Psoas muscle (tissue), 8 donors: ENCODE measurements at regions of chr15 and their contacts with region 1.

Region 1: DNA sequence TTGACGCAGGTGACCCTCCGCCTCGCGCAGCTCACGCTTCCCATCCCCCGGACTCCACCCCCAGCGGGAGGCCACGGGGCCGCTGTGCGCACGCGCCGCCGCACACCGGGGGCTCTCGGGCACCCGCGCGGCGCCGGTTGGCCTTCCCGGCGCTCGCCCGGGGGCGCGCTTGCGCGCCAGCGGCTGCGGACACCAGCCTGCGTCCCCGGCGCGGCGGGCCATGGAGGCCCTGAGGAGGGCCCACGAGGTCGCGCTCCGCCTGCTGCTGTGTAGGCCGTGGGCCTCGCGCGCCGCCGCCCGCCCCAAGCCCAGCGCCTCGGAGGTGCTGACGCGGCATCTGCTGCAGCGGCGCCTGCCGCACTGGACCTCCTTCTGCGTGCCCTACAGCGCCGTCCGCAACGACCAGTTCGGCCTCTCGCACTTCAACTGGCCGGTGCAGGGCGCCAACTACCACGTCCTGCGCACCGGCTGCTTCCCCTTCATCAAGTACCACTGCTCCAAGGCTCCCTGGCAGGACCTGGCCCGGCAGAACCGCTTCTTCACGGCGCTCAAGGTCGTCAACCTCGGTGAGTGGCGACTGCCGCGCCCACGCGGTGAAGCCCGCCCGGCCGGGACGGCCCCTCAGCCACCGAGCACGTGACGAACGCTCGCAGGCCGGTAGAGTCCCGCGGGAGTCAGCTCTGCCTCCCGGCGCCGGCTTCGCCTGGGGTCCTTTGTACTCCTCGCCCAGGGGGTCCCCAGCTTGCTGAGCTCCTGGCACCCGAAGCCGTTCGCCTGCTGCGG is at the start of gene C15orf61:
- DNase-seq: peak; percentile 88 to 92
- ATAC-seq: peak; percentile 84 to 90 (median 87)
- H3K4me3 ChIP-seq: peak within 1 kb of the TSS; percentile 93
- H3K27ac ChIP-seq: peak within 1 kb of the TSS; percentile 99
- H3K4me1 ChIP-seq: peaks cover 28% of the 10 kb centered on the region
- H3K27me3 ChIP-seq: no peaks in the 10 kb centered on the region
- CTCF ChIP-seq: no peak
- total RNA-seq, gene C15orf61: 11.2 to 20.9 (median 11.9) TPM

Region 2: GRCh38 chr15:67542420-67543347 is 21.5 kb after region 1 on chr15 and contains the start of gene MAP2K5:
- intact Hi-C with region 1: loop called in 1 of 2 experiments (anchors 1 kb)
- DNase-seq: peak; percentile 91 to 93
- ATAC-seq: peak; percentile 85 to 93 (median 89)
- H3K4me3 ChIP-seq: peak within 1 kb of the TSS; percentile 85
- H3K27ac ChIP-seq: peak within 1 kb of the TSS; percentile 90
- H3K4me1 ChIP-seq: peaks cover 12% of the 10 kb centered on the region
- H3K27me3 ChIP-seq: no peaks in the 10 kb centered on the region
- CTCF ChIP-seq: no peak
- total RNA-seq, gene MAP2K5: 14.4 to 24.0 (median 17.8) TPM

Region 3: DNA sequence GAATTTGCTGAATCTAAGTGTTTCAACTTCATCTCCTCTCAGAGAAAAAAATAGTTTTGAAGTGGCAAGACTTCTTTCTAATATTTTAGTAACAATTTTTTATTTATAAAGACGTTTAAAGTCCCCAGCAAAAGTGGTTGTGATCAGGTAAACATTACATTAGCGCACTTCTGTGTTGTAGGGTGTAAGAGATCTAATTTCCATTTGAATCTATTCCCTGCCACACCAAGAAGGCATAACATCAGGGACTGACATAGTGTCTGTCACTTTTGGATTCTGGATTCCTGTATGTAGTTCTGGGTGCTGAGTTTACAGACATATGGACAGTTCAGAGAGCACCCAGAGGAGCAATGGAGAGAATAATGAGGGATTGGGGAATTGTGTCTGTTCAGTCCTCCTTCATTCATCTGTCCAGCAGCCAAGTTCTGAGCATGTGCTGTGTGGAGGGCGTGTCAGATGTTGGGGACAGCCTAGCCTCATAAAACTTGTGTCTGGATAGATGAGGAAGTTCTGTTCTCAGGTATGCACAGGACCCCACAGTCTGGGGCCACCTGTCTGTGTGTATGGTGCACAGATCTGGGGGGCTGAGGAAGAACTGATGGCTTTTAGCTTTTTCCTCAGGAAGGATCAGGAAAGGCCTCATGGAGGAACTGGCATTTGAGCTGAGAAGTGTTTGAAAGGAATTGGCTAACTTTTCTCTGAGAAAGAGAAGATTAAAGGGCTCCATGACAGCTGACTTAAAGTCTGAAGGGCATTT is 86.9 kb after region 1 on chr15:
- intact Hi-C with region 1: no loop called
- DNase-seq: no peak
- ATAC-seq: no peak
- H3K4me3 ChIP-seq: no peak overlapping the region
- H3K27ac ChIP-seq: no peak overlapping the region
- H3K4me1 ChIP-seq: no peaks in the 10 kb centered on the region
- H3K27me3 ChIP-seq: no peaks in the 10 kb centered on the region
- CTCF ChIP-seq: no peak

Region 4: DNA sequence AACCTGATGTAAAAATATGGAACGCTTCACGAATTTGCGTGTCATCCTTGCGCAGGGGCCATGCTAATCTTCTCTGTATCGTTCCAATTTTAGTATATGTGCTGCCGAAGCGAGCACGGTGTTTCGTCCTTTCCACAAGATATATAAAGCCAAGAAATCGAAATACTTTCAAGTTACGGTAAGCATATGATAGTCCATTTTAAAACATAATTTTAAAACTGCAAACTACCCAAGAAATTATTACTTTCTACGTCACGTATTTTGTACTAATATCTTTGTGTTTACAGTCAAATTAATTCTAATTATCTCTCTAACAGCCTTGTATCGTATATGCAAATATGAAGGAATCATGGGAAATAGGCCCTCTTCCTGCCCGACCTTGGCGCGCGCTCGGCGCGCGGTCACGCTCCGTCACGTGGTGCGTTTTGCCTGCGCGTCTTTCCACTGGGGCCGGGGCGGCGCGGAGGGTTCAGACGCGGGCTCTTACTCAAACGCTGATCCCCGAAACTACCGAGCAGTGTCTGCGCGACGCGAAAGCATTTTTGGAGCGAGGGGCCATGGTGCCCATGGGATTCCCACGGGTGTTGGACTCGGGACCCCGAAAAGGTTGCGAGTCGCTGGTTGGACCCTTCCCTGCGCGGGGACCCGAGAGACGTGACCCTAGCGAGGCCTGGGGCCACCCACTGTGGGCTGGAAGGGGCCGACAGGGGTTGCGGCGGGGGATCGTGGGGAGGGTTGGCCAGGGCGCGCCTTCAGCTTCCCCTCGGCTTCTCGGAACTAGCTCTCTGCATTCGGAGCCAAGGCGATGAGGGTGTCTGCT is 318.9 kb after region 1 on chr15 and contains the start of gene RNU6-1:
- intact Hi-C with region 1: loop called in 1 of 2 experiments (anchors 5 kb)
- DNase-seq: peak; percentile 95 to 97
- ATAC-seq: peak; percentile 93 to 95 (median 94)
- H3K4me3 ChIP-seq: peak within 1 kb of the TSS; percentile 83
- H3K27ac ChIP-seq: peak within 1 kb of the TSS; percentile 94
- H3K4me1 ChIP-seq: peaks cover 14% of the 10 kb centered on the region
- H3K27me3 ChIP-seq: peaks cover 0 to 7% (median 0%) of the 10 kb centered on the region in 3 donors
- CTCF ChIP-seq: no peak
- total RNA-seq, gene RNU6-1: not detected

Region 5: DNA sequence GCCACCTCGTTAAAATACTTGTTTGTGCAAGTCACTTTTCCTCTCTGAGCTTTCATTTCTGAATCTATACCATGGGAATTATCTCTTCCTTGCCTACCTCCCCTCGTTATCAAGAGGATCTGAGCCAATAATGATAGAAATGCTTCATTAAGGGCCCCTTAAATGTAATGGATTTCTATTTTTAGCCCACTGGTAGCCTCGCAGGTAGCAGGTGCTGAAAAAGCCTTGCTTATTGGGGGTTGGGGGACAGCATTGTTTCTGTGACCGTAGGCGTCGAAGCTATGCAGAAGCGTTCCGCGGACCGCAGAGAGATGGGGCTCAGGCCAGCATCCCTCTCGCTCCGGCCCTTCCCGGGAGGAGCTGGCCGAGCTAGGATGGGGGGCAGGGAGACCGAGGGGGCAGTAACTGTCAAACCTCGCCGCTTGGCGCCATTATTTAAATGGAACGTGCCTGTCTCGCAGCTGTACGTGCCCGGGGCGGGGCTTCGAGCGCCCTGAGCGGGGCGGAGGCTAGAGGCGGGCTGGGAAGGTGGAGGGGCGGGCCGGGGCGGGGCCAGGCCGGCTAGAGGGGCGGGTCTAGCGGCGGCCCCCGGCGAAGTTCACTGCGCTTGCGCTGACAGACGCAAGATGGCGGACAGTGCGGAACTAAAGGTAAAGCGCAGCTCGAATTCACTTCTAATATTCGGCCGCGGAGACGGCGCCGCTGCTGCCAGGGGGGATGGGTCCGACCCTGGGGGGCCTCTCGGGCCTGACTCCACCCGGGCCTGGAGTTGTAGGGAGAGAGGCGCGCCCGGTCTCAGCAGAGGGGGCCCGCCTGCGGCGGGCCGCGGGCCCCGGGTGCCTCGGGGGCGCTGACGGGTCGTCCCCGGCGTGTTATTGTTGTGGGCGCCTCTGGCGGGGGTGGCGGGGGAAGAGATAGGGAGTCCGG is 532.7 kb after region 1 on chr15 and contains the start of gene PIAS1:
- intact Hi-C with region 1: loop called in 1 of 2 experiments (anchors 5 kb)
- DNase-seq: peak; percentile 95 to 98
- ATAC-seq: peak; percentile 97 to 99 (median 98)
- H3K4me3 ChIP-seq: peak within 1 kb of the TSS; percentile 89
- H3K27ac ChIP-seq: peak within 1 kb of the TSS; percentile 90
- H3K4me1 ChIP-seq: peaks cover 32% of the 10 kb centered on the region
- H3K27me3 ChIP-seq: no peaks in the 10 kb centered on the region
- CTCF ChIP-seq: no peak
- total RNA-seq, gene PIAS1: 18.2 to 28.7 (median 20.8) TPM